ENCODE measurements at regions of chr3 and their contacts with region 1.

Region 1: GRCh38 chr3:184561061-184561912 is at the start of gene EPHB3:
- DNase-seq: peak; percentile 99 to 100
- H3K4me3 ChIP-seq: peak within 1 kb of the TSS; percentile 13 to 63 (median 38); a peak in 7 of 8 replicates
- H3K27ac ChIP-seq: no peak within 1 kb of the TSS
- H3K4me1 ChIP-seq: peaks cover 17 to 41% (median 38%) of the 10 kb centered on the region in 4 experiments
- H3K27me3 ChIP-seq: peaks cover 52 to 83% (median 79%) of the 10 kb centered on the region in 4 experiments
- CTCF ChIP-seq: peak in 2 of 3 experiments; percentile 96 to 100; a peak in 3 of 4 replicates
- EP300 ChIP-seq: no peak
- POLR2A ChIP-seq: 0 out of 3 replicates have a peak, but pooled peaks of 1 of the 2 experiments have one; percentile 46
- RAD21 ChIP-seq: peak; percentile 98
- total RNA-seq, gene EPHB3: 0.80 and 0.91 TPM in 2 replicates

Region 2: GRCh38 chr3:184405075-184406030 is 155.9 kb before region 1 on chr3:
- CTCF ChIA-PET with region 1: no interaction called
- POLR2A ChIA-PET with region 1: no interaction called
- DNase-seq: no peak
- H3K4me3 ChIP-seq: no peak overlapping the region
- H3K27ac ChIP-seq: no peak overlapping the region
- H3K4me1 ChIP-seq: no peaks in the 10 kb centered on the region
- H3K27me3 ChIP-seq: peaks cover 0 to 2% (median 0%) of the 10 kb centered on the region in 4 experiments; a peak in 1 of 7 replicates
- CTCF ChIP-seq: no peak
- EP300 ChIP-seq: no peak
- POLR2A ChIP-seq: no peak
- RAD21 ChIP-seq: no peak

Region 3: GRCh38 chr3:184513276-184514170 is 47.8 kb before region 1 on chr3:
- CTCF ChIA-PET with region 1: interaction called, 11 read pairs
- POLR2A ChIA-PET with region 1: no interaction called
- DNase-seq: peak; percentile 75 to 95
- H3K4me3 ChIP-seq: peak overlapping the region; percentile 13 to 61 (median 50)
- H3K27ac ChIP-seq: no peak overlapping the region
- H3K4me1 ChIP-seq: peaks cover 0 to 5% (median 1%) of the 10 kb centered on the region in 4 experiments; a peak in 2 of 7 replicates
- H3K27me3 ChIP-seq: peaks cover 10 to 27% (median 17%) of the 10 kb centered on the region in 4 experiments
- CTCF ChIP-seq: peak; percentile 75 to 86 (median 79)
- EP300 ChIP-seq: no peak
- POLR2A ChIP-seq: no peak
- RAD21 ChIP-seq: peak; percentile 81 to 86

Region 4: GRCh38 chr3:184583578-184584425 is 22.5 kb after region 1 on chr3:
- CTCF ChIA-PET with region 1: interaction called, 51 read pairs
- POLR2A ChIA-PET with region 1: interaction called, 46 read pairs
- DNase-seq: peak in 1 of 2 experiments; percentile 68
- H3K4me3 ChIP-seq: peak overlapping the region; percentile 51 to 71 (median 58)
- H3K27ac ChIP-seq: no peak overlapping the region
- H3K4me1 ChIP-seq: peaks cover 0 to 28% (median 20%) of the 10 kb centered on the region in 4 experiments; a peak in 6 of 7 replicates
- H3K27me3 ChIP-seq: peaks cover 8 to 63% (median 50%) of the 10 kb centered on the region in 4 experiments
- CTCF ChIP-seq: peak in 2 of 3 experiments; percentile 18 to 51; a peak in 2 of 4 replicates
- EP300 ChIP-seq: no peak
- POLR2A ChIP-seq: no peak
- RAD21 ChIP-seq: peak in 1 of 2 experiments; percentile 37; a peak in 1 of 4 replicates

Region 5: DNA sequence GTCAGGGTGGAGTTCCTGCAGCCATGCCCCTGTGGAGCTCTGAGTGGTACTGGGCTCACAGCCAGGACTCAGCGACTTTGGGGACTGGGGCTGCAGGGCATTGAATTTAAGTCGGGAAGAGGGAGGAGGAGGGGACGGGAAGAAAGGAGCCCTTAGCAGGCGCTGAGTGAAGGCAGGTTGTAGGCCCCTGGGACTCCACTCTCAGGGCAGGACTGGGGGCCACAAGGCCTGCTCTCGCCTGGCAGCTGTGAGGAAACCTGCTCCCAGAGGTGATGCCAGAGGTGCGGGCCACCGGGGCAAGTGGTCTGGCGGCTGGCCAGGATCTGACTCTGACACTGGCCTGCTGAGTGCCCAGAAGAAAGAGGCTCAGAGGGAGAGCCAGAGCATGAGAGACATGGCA is 73.8 kb after region 1 on chr3:
- CTCF ChIA-PET with region 1: interaction called, 10 read pairs
- POLR2A ChIA-PET with region 1: no interaction called
- DNase-seq: no peak
- H3K4me3 ChIP-seq: no peak overlapping the region
- H3K27ac ChIP-seq: no peak overlapping the region
- H3K4me1 ChIP-seq: peaks cover 0 to 19% (median 11%) of the 10 kb centered on the region in 4 experiments; a peak in 6 of 7 replicates
- H3K27me3 ChIP-seq: peaks cover 0 to 5% (median 0%) of the 10 kb centered on the region in 4 experiments; a peak in 1 of 7 replicates
- CTCF ChIP-seq: no peak
- EP300 ChIP-seq: no peak
- POLR2A ChIP-seq: no peak
- RAD21 ChIP-seq: no peak

Region 6: DNA sequence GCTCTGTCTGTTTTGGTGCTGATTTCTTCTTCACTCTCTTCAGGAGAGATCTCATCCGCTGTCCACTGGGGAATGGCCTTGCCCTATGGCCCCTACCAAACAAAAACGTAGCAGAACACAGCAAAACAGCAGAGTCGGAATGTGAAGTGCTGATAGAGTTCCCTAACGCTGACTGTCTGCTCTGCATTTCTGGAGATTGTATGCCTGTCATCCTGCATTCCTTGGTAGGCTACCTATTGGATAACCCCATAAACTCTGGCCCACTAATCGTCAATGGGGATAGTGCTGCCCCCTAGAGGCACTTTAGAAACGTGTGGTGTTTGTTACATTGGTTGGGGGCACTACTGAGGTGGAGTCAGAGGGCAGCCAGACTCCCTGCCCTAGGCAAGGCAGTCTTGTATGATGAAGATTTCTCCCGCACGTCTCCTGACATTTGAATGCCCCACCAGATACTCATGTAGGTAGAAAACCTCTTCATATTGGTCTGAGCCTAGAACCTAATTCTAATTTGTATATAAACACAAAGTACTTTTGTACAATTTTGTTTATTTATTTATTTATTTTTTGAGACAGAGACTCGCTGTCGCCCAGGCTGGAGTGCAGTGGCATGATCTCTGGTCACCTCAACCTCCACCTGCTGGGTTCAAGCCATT is 166.2 kb after region 1 on chr3:
- CTCF ChIA-PET with region 1: interaction called, 26 read pairs
- POLR2A ChIA-PET with region 1: no interaction called
- DNase-seq: peak; percentile 74 to 78
- H3K4me3 ChIP-seq: no peak overlapping the region
- H3K27ac ChIP-seq: no peak overlapping the region
- H3K4me1 ChIP-seq: no peaks in the 10 kb centered on the region; a peak in 1 of 7 replicates
- H3K27me3 ChIP-seq: peaks cover 0 to 3% (median 0%) of the 10 kb centered on the region in 4 experiments; a peak in 3 of 7 replicates
- CTCF ChIP-seq: peak; percentile 58 to 97 (median 95)
- EP300 ChIP-seq: no peak
- POLR2A ChIP-seq: no peak
- RAD21 ChIP-seq: peak; percentile 85 to 93

Region 7: DNA sequence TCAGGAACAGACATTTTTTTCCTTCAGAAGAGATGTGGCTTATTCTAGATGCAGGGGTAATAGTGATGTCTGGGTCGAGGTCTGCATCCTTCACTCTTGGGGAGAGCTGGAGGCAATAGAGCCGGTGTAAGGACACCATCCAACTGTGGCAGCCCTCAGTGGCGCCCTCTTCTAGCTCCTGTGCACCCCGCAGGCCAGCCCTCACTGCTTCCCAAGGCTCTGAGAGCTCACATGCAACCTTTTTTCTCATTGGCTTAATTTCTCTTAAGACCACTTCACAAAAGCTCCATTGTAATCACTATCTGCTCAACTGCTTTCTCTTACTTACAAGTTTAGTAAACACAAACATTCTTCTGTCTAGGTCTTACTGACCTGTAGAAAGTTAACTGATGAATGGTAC is 246.7 kb after region 1 on chr3:
- CTCF ChIA-PET with region 1: interaction called, 11 read pairs
- POLR2A ChIA-PET with region 1: interaction called, 4 read pairs
- DNase-seq: peak; percentile 38 to 67
- H3K4me3 ChIP-seq: no peak overlapping the region
- H3K27ac ChIP-seq: no peak overlapping the region
- H3K4me1 ChIP-seq: peaks cover 0 to 5% (median 2%) of the 10 kb centered on the region in 4 experiments; a peak in 3 of 7 replicates
- H3K27me3 ChIP-seq: no peaks in the 10 kb centered on the region; a peak in 1 of 7 replicates
- CTCF ChIP-seq: peak; percentile 72 to 80 (median 80)
- EP300 ChIP-seq: no peak
- POLR2A ChIP-seq: no peak
- RAD21 ChIP-seq: peak; percentile 38 to 51; a peak in 3 of 4 replicates